Gastrocnemius medialis (tissue), 4 donors: ENCODE measurements at regions of chr3 and their contacts with region 1.

Region 1: GRCh38 chr3:12841149-12841970 is at the start of gene RPL32:
- DNase-seq: peak; percentile 83 to 87
- ATAC-seq: peak; percentile 84 to 87
- H3K4me3 ChIP-seq: peak within 1 kb of the TSS; percentile 81 to 97 (median 93)
- H3K27ac ChIP-seq: peak within 1 kb of the TSS; percentile 91 to 94 (median 92)
- H3K4me1 ChIP-seq: peaks cover 39 to 42% of the 10 kb centered on the region in 2 donors
- H3K27me3 ChIP-seq: no peaks in the 10 kb centered on the region
- CTCF ChIP-seq: peak; percentile 69 to 87 (median 85)
- POLR2A ChIP-seq: peak; percentile 93
- total RNA-seq, gene RPL32: 765 to 1,204 (median 990) TPM

Region 2: DNA sequence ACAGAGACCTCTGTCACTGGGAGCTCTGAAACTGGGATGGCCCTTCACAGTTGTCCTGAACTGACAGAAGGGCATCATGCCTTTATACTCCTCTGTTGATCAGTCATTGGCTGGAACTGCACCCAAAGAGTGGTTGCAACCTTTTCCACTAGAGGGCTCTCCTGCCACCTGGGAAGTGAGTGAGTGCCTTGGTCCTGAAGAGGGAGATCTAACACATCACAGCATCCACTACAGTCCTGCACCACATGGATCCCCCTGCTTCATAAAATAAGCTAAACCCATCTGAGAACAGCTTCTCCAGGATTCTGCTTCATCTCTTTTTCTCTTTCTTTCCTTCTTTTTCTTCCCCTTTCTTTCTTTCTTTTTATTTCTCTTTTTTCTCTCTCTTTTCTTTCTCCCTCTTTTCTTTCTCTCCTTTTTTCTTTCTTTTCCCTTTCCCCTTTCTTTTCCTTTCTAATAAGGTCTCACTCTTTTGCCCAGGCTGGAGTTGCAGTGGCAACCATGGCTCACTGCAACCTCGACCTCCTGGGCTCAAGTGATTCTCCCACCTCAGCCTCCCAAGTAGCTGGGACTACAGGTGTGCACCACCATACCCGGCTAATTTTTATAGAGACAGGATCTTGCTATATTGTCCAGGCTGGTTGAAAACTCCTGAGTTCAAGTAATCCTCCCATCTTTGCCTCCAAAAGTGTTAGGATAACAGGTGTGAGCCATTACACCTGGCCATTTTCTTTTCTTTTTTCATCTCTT is 134.7 kb before region 1 on chr3:
- in situ Hi-C with region 1: no loop called
- intact Hi-C with region 1: loop called (anchors 5 kb)
- DNase-seq: peak; percentile 36 to 76
- ATAC-seq: peak; percentile 78 to 89
- H3K4me3 ChIP-seq: no peak overlapping the region
- H3K27ac ChIP-seq: peak overlapping the region in 2 of 4 donors; percentile 21 to 49
- H3K4me1 ChIP-seq: peaks cover 11 to 27% of the 10 kb centered on the region in 2 donors
- H3K27me3 ChIP-seq: no peaks in the 10 kb centered on the region
- CTCF ChIP-seq: peak; percentile 38 to 76 (median 64)
- POLR2A ChIP-seq: no peak

Region 3: GRCh38 chr3:12796171-12797123 is 44.9 kb before region 1 on chr3 and contains the start of gene CAND2:
- in situ Hi-C with region 1: no loop called
- intact Hi-C with region 1: loop called (anchors 1 kb)
- DNase-seq: peak; percentile 72 to 85
- ATAC-seq: peak; percentile 14 to 28
- H3K4me3 ChIP-seq: peak within 1 kb of the TSS; percentile 70 to 88 (median 82)
- H3K27ac ChIP-seq: peak within 1 kb of the TSS; percentile 99 to 100 (median 99)
- H3K4me1 ChIP-seq: peaks cover 32 to 39% of the 10 kb centered on the region in 2 donors
- H3K27me3 ChIP-seq: no peaks in the 10 kb centered on the region
- CTCF ChIP-seq: no peak
- POLR2A ChIP-seq: peak; percentile 91 to 93
- total RNA-seq, gene CAND2: 133 to 308 (median 181) TPM

Region 4: GRCh38 chr3:12810013-12810780 is 31.2 kb before region 1 on chr3:
- in situ Hi-C with region 1: no loop called
- intact Hi-C with region 1: loop called (anchors 2 kb)
- DNase-seq: peak; percentile 84 to 90
- ATAC-seq: peak; percentile 79 to 88
- H3K4me3 ChIP-seq: peak overlapping the region; percentile 54 to 90 (median 64)
- H3K27ac ChIP-seq: peak overlapping the region; percentile 71 to 99 (median 92)
- H3K4me1 ChIP-seq: peaks cover 40 to 48% of the 10 kb centered on the region in 2 donors
- H3K27me3 ChIP-seq: no peaks in the 10 kb centered on the region
- CTCF ChIP-seq: peak; percentile 60 to 94 (median 80)
- POLR2A ChIP-seq: peak; percentile 1 to 34